Uterus (tissue), 4 donors: ENCODE measurements at regions of chr2 and their contacts with region 1.

Region 1: DNA sequence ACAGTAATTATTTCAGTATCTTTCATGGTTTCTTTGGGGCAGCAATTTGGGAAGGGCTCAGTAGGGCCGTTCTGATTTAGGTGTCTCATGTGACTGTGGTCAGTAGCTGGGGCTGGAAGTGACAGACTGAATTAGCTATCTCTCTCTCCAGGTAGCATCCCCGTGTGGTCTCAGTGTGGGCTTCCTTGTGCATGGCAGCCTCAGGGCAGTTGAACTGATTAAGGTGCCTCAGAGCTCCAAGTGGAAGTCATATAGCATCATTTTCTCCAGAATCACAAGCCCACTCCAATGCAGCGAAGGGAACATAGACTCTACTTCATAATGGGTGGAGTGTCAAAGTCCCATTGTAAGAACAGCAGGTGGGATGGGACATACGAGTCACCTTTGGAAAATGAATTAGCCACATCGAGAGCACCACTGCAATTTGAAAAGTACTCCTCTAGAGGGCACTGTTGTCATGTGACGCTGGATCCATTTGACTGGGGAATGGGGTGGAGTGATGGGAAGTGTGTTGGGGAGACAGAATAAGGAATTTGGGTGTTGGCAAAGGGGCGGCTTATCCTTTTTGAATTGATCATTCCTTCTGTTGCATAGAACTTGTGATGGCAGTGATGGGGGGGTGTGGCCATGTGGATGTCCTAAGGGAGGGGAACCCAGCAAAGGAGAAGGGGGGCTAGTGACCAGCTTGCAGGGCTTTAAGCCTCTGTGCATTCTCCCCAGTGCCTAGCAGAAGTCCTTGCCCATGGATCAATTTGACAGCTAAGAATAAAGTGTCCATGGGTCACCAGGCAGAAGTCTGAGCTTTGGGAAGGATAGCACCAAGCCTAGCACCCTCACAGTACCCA is 39.3 kb upstream of the FAM136A start:
- DNase-seq: no peak
- H3K4me3 ChIP-seq: no peak overlapping the region
- H3K27ac ChIP-seq: no peak overlapping the region
- H3K4me1 ChIP-seq: no peaks in the 10 kb centered on the region
- H3K27me3 ChIP-seq: no peaks in the 10 kb centered on the region
- CTCF ChIP-seq: peak in 3 of 4 experiments; percentile 31 to 64 (median 55)
- POLR2A ChIP-seq: no peak

Region 2: GRCh38 chr2:70381831-70382267 is 40.7 kb after region 1 on chr2:
- intact Hi-C with region 1: no loop called
- DNase-seq: no peak
- H3K4me3 ChIP-seq: no peak overlapping the region
- H3K27ac ChIP-seq: no peak overlapping the region
- H3K4me1 ChIP-seq: no peaks in the 10 kb centered on the region
- H3K27me3 ChIP-seq: no peaks in the 10 kb centered on the region
- CTCF ChIP-seq: no peak
- POLR2A ChIP-seq: no peak

Region 3: DNA sequence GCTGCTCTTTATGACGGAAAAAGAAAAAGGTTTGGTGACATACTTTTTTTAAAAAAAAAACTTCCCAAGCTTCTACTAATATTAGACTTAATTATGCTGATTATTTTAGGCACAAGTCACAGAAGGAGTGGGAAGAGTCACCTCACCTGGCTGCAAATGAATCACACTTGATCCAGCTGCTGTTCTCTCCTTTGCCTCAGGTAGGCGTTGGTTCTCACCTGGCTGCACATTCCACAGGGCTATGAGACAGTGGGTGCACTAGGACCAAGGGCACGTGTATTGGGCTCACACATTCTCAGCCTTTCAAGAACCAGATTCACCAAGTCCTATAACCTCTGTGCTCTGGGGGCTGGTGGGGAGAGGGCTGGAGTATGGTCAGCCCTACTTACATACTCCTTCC is 119.2 kb after region 1 on chr2:
- intact Hi-C with region 1: no loop called
- DNase-seq: no peak
- H3K4me3 ChIP-seq: no peak overlapping the region
- H3K27ac ChIP-seq: no peak overlapping the region
- H3K4me1 ChIP-seq: no peaks in the 10 kb centered on the region
- H3K27me3 ChIP-seq: no peaks in the 10 kb centered on the region
- CTCF ChIP-seq: no peak
- POLR2A ChIP-seq: no peak

Region 4: GRCh38 chr2:70553584-70554337 is 212.6 kb after region 1 on chr2 and contains the start of gene TGFA:
- intact Hi-C with region 1: no loop called
- DNase-seq: peak; percentile 26 to 28
- H3K4me3 ChIP-seq: peak within 1 kb of the TSS; percentile 37 to 39
- H3K27ac ChIP-seq: no peak within 1 kb of the TSS
- H3K4me1 ChIP-seq: peaks cover 0 to 13% of the 10 kb centered on the region in 2 donors
- H3K27me3 ChIP-seq: peaks cover 0 to 13% of the 10 kb centered on the region in 2 donors
- CTCF ChIP-seq: peak; percentile 43 to 58 (median 48)
- POLR2A ChIP-seq: no peak
- total RNA-seq, gene TGFA: 1.5 to 3.7 (median 1.6) TPM in 3 of 4 donors, not detected in the other

Region 5: GRCh38 chr2:70616168-70616694 is 275.1 kb after region 1 on chr2:
- intact Hi-C with region 1: loop called (anchors 5 kb)
- DNase-seq: no peak
- H3K4me3 ChIP-seq: no peak overlapping the region
- H3K27ac ChIP-seq: no peak overlapping the region
- H3K4me1 ChIP-seq: no peaks in the 10 kb centered on the region
- H3K27me3 ChIP-seq: no peaks in the 10 kb centered on the region
- CTCF ChIP-seq: no peak
- POLR2A ChIP-seq: no peak